GM12878 (cell line): ENCODE measurements at regions of chr1 and their contacts with region 1.

Region 1: DNA sequence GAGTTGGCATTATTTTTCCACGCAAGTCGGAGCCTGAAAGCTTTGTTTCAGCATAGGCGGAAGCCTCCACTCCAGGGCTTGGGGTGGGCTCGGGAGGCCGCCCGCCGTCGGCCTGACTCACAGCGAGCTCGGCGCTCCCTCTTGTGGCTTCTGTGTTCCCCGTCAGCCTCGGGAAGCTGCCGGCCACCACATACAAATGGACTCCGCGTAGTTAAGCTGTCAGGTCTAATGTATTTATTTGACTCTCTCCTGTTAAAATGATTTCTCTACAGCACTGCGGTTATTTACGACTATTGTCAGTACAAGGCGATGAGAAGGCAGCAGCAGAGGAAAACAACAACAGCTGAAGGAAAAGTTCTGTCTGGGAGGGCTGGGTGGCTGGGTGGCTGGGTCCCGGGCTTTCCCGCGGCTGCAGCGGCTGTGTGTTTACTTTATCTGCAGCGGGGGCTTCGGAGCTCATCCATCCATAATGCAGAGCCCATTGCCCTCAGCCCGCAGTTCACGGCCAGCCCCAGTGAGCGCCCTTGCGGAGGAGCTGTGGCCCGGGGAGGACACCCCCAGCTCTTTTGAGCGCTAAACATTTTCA is 375.7 kb upstream of the CAMK1G start:
- DNase-seq: no peak
- ATAC-seq: peak; percentile 81
- H3K4me3 ChIP-seq: no peak overlapping the region
- H3K27ac ChIP-seq: no peak overlapping the region
- H3K4me1 ChIP-seq: no peaks in the 10 kb centered on the region
- H3K27me3 ChIP-seq: peaks cover 4 to 6% of the 10 kb centered on the region in 2 experiments; a peak in 3 of 4 replicates
- CTCF ChIP-seq: peak; percentile 51 to 74 (median 61); a peak in 5 of 6 replicates
- EP300 ChIP-seq: no peak
- POLR2A ChIP-seq: no peak
- RAD21 ChIP-seq: peak; percentile 84

Region 2: GRCh38 chr1:208652296-208653160 is 555.3 kb before region 1 on chr1:
- CTCF ChIA-PET with region 1: interaction called, 7 read pairs
- POLR2A ChIA-PET with region 1: no interaction called
- RAD21 ChIA-PET with region 1: interaction called, 5 read pairs
- SMC1A ChIA-PET with region 1: no interaction called
- in situ Hi-C with region 1: loop called (anchors 10 kb)
- intact Hi-C with region 1: loop called (anchors 5 kb)
- DNase-seq: peak; percentile 8
- ATAC-seq: peak; percentile 94
- H3K4me3 ChIP-seq: no peak overlapping the region
- H3K27ac ChIP-seq: no peak overlapping the region
- H3K4me1 ChIP-seq: no peaks in the 10 kb centered on the region
- H3K27me3 ChIP-seq: no peaks in the 10 kb centered on the region
- CTCF ChIP-seq: peak; percentile 73 to 83 (median 77)
- EP300 ChIP-seq: no peak
- POLR2A ChIP-seq: no peak
- RAD21 ChIP-seq: peak; percentile 65

Region 3: DNA sequence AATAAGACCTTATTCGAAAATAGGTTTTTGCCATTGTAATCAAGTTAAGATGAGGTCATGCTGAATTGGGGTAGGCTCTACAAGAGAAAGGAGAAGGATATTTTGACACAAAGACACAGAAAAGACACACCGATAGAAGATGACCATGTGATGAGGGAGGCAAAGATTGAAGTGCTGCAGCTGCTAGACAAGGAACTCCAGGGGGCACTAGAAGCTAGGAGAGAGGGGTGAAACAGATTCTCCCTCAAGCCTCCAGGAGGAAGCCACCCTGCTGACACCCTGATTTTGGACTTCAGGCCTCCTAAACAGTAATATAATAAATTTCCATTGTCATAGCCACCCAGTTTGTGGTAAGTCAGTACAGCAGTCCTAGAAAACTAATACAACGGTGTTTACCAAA is 131.1 kb before region 1 on chr1:
- CTCF ChIA-PET with region 1: interaction called, 9 read pairs
- POLR2A ChIA-PET with region 1: no interaction called
- RAD21 ChIA-PET with region 1: interaction called, 3 read pairs
- SMC1A ChIA-PET with region 1: interaction called, 4 read pairs
- in situ Hi-C with region 1: no loop called
- intact Hi-C with region 1: loop called (anchors 5 kb)
- DNase-seq: no peak
- ATAC-seq: peak; percentile 74
- H3K4me3 ChIP-seq: no peak overlapping the region
- H3K27ac ChIP-seq: no peak overlapping the region
- H3K4me1 ChIP-seq: no peaks in the 10 kb centered on the region
- H3K27me3 ChIP-seq: no peaks in the 10 kb centered on the region
- CTCF ChIP-seq: peak; percentile 45 to 65 (median 60)
- EP300 ChIP-seq: no peak
- POLR2A ChIP-seq: no peak
- RAD21 ChIP-seq: peak; percentile 87

Region 4: GRCh38 chr1:209513226-209513625 is 305.4 kb after region 1 on chr1:
- CTCF ChIA-PET with region 1: interaction called, 11 read pairs
- POLR2A ChIA-PET with region 1: no interaction called
- RAD21 ChIA-PET with region 1: no interaction called
- SMC1A ChIA-PET with region 1: no interaction called
- in situ Hi-C with region 1: no loop called
- intact Hi-C with region 1: no loop called
- DNase-seq: no peak
- ATAC-seq: peak; percentile 85
- H3K4me3 ChIP-seq: no peak overlapping the region
- H3K27ac ChIP-seq: no peak overlapping the region
- H3K4me1 ChIP-seq: no peaks in the 10 kb centered on the region
- H3K27me3 ChIP-seq: no peaks in the 10 kb centered on the region
- CTCF ChIP-seq: peak; percentile 59 to 68 (median 62); a peak in 5 of 6 replicates
- EP300 ChIP-seq: no peak
- POLR2A ChIP-seq: no peak
- RAD21 ChIP-seq: peak; percentile 50